ENCODE measurements at regions of chr17 and their contacts with region 1.

Region 1: GRCh38 chr17:55513885-55514591 is 2.8 kb upstream of the SMIM36 start:
- DNase-seq: peak; percentile 88
- ATAC-seq: peak; percentile 68
- H3K4me3 Mint-ChIP-seq: no peak overlapping the region
- H3K27ac Mint-ChIP-seq: no peak overlapping the region
- H3K4me1 Mint-ChIP-seq: no peaks in the 10 kb centered on the region
- H3K27me3 Mint-ChIP-seq: peaks cover 6% of the 10 kb centered on the region
- CTCF ChIP-seq: peak; percentile 80

Region 2: GRCh38 chr17:54749157-54749556 is 764.9 kb before region 1 on chr17:
- CTCF ChIA-PET with region 1: no interaction called
- POLR2A ChIA-PET with region 1: no interaction called
- intact Hi-C with region 1: no loop called
- DNase-seq: no peak
- ATAC-seq: no peak
- H3K4me3 Mint-ChIP-seq: no peak overlapping the region
- H3K27ac Mint-ChIP-seq: no peak overlapping the region
- H3K4me1 Mint-ChIP-seq: no peaks in the 10 kb centered on the region
- H3K27me3 Mint-ChIP-seq: peaks cover 3% of the 10 kb centered on the region
- CTCF ChIP-seq: no peak

Region 3: DNA sequence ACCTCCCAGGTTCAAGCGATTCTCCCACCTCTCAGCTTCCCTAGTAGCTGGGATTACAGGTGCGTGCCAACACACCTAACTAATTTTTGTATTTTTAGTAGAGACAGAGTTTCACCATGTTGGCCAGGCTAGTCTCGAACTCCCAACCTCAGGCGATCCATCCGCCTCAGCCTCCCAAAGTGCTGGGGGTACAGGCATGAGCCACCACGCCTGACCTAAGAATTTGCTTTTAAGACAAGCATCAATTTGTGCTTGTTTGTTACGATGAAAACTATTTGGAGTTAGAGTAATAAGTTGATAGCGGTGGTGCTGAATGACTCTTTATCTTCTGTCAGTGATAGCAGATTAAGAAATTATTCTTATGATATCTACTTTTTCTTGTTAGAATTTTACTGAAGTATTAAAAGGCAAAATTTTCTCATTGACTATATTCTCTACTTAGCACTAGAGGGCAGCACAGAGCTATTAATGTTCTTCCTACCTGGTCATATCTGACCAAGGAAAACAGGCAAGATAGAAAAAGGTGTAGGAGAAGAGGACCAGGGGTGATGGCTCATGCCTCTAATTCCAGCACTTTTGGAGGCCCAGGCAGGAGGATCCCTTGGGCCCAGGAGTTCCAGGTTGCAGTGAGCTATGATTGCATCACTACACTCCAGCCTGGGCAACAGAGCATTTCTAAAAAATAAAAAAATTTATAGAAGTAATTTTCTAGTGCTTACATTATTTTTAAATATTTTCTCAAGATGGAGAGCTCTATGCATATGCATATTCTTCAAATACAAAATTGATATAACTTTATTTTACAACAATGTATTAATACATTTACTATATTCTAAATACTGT is 521.0 kb before region 1 on chr17:
- CTCF ChIA-PET with region 1: interaction called, 10 read pairs
- POLR2A ChIA-PET with region 1: no interaction called
- intact Hi-C with region 1: loop called (anchors 10 kb)
- DNase-seq: no peak
- ATAC-seq: no peak
- H3K4me3 Mint-ChIP-seq: no peak overlapping the region
- H3K27ac Mint-ChIP-seq: no peak overlapping the region
- H3K4me1 Mint-ChIP-seq: no peaks in the 10 kb centered on the region
- H3K27me3 Mint-ChIP-seq: no peaks in the 10 kb centered on the region
- CTCF ChIP-seq: peak; percentile 70

Region 4: GRCh38 chr17:55356434-55357328 is 157.4 kb before region 1 on chr17:
- CTCF ChIA-PET with region 1: interaction called, 57 read pairs
- POLR2A ChIA-PET with region 1: no interaction called
- intact Hi-C with region 1: loop called (anchors 5 kb)
- DNase-seq: peak; percentile 89
- ATAC-seq: peak; percentile 94
- H3K4me3 Mint-ChIP-seq: no peak overlapping the region
- H3K27ac Mint-ChIP-seq: no peak overlapping the region
- H3K4me1 Mint-ChIP-seq: peaks cover 2% of the 10 kb centered on the region
- H3K27me3 Mint-ChIP-seq: peaks cover 9% of the 10 kb centered on the region
- CTCF ChIP-seq: peak; percentile 68

Region 5: DNA sequence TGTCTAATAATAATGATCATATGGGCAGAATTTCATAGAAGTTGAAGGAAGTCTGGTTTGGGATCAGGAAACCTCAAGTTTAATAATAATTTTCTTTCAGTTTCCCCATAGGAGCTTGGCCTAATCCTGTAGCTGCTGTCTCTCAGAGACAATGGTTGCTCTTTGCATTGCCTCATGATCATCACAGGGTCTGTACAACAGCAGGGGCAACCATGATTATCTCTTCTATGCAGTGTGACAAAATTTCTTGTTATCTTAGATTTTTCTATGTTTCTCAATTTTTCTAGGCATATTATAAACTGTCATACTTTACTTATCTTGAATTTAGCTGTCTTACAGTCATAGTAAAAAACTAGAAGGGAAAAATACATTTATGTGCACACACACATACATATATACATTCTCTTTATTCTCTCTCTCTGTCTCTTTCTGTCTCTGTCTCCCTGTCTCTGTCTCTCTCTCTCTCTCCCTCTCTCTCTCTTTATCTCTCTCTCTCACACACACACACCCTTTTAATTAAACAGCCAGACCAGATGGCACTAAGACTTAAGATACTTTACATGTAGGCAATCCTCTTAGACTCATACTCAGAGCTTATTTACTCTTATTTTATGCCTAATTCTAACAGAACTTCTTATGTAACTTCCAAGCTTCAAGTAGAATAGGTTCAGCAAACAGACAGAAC is 33.3 kb before region 1 on chr17:
- CTCF ChIA-PET with region 1: interaction called, 10 read pairs
- POLR2A ChIA-PET with region 1: no interaction called
- intact Hi-C with region 1: no loop called
- DNase-seq: no peak
- ATAC-seq: no peak
- H3K4me3 Mint-ChIP-seq: no peak overlapping the region
- H3K27ac Mint-ChIP-seq: no peak overlapping the region
- H3K4me1 Mint-ChIP-seq: no peaks in the 10 kb centered on the region
- H3K27me3 Mint-ChIP-seq: peaks cover 5% of the 10 kb centered on the region
- CTCF ChIP-seq: no peak

Region 6: GRCh38 chr17:55527540-55528118 is 13.6 kb after region 1 on chr17:
- CTCF ChIA-PET with region 1: interaction called, 28 read pairs
- POLR2A ChIA-PET with region 1: no interaction called
- intact Hi-C with region 1: no loop called
- DNase-seq: peak; percentile 13
- ATAC-seq: no peak
- H3K4me3 Mint-ChIP-seq: no peak overlapping the region
- H3K27ac Mint-ChIP-seq: no peak overlapping the region
- H3K4me1 Mint-ChIP-seq: peaks cover 3% of the 10 kb centered on the region
- H3K27me3 Mint-ChIP-seq: peaks cover 5% of the 10 kb centered on the region
- CTCF ChIP-seq: no peak